ENCODE measurements at regions of chr5 and their contacts with region 1.

Region 1: DNA sequence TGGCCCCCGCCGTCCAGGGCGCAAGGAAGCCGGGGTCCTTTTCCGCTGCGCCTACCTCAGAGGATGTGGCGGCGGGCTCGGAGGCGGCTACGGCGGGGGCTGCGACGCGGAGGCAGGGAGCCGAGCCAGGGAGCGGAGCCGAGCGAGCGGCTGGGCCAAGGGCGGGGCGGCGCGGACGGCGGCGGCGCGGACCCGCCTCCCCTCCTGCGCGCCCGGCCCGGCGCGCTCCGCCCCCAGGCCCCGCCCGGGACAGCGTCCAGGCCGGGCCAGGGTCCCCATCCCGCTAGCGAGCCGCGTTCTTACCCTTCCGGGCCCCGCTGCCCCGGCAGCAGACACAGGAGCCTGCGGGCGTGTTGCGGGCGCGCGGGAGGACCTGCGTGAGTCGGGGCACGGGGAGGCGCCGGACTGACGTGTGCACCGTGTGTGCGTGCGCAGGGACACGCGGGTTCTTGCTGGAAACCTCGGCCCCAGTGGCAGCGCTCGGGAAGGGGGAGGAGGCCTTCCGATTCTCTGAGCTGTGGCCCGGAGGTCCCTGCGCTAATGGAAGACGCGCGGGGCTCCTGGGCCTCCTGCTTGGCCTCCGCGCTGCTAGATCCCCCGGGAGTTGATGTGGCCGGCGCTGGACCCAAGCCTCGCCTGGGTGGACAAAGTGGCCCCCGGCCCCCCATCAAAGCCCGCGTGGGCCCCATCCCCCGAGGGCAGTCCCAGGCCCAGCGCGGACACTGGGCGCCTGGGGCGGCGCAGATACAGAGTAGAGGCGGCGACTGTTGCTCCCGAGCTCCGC is at the start of gene VDAC1:
- DNase-seq: peak; percentile 90
- H3K4me3 ChIP-seq: peak within 1 kb of the TSS; percentile 97
- H3K27ac ChIP-seq: peak within 1 kb of the TSS; percentile 98
- H3K4me1 ChIP-seq: peaks cover 15% of the 10 kb centered on the region
- H3K27me3 ChIP-seq: no peaks in the 10 kb centered on the region
- CTCF ChIP-seq: no peak
- total RNA-seq, gene VDAC1: 354 and 367 TPM in 2 replicates

Region 2: DNA sequence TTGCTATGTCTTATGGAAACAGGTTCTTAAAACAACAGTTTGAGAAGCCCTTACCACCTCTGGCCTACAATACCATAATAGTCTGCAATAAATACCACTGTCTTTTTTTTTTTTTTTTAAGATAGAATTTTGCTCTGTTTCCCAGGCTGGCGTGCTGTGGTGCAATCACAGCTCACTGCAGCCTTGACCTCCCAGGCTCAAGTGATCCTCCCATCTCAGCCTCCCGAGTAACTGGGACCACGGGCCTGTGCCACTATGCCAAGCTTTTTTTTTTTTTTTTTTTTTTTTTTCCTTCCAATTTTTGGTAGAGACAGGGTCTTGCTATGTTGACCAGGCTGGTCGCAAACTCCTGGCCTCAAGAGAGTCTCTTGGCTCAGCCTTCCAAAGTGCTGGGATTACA is 1078.3 kb before region 1 on chr5:
- CTCF ChIA-PET with region 1: no interaction called
- POLR2A ChIA-PET with region 1: interaction called, 11 read pairs
- intact Hi-C with region 1: no loop called
- DNase-seq: no peak
- H3K4me3 ChIP-seq: no peak overlapping the region
- H3K27ac ChIP-seq: no peak overlapping the region
- H3K4me1 ChIP-seq: no peaks in the 10 kb centered on the region
- H3K27me3 ChIP-seq: no peaks in the 10 kb centered on the region
- CTCF ChIP-seq: no peak

Region 3: DNA sequence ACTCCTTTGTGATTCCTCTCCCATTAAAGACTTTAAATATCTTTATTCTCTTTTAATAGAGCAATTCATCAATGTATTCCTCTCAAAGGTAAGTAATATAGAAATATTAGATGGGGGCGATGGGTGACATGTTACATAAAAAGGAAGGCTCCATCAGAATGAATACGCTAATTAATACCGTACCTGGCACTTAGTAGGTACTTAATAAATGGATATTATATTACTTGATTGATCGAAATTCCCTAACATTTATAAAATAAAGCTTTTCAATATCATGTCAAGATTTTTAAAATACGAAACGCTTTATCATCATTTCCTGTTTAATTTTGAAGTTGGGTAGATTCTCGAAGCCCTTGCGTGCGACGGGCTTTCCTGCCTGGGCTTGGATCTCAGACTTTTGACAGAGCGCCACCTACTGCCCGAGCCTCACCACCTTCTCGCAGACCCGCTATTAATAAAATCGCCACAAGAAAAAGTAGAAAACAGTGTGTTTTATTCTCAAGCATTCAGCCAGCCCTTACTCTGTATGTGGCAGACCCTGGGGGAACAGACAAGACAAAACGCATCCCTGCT is 135.8 kb before region 1 on chr5:
- CTCF ChIA-PET with region 1: no interaction called
- POLR2A ChIA-PET with region 1: interaction called, 10 read pairs
- intact Hi-C with region 1: no loop called
- DNase-seq: peak; percentile 89
- H3K4me3 ChIP-seq: no peak overlapping the region
- H3K27ac ChIP-seq: peak overlapping the region; percentile 91
- H3K4me1 ChIP-seq: peaks cover 76% of the 10 kb centered on the region
- H3K27me3 ChIP-seq: no peaks in the 10 kb centered on the region
- CTCF ChIP-seq: peak; percentile 95

Region 4: GRCh38 chr5:133938929-133939328 is 65.9 kb before region 1 on chr5:
- CTCF ChIA-PET with region 1: no interaction called
- POLR2A ChIA-PET with region 1: no interaction called
- intact Hi-C with region 1: no loop called
- DNase-seq: no peak
- H3K4me3 ChIP-seq: no peak overlapping the region
- H3K27ac ChIP-seq: no peak overlapping the region
- H3K4me1 ChIP-seq: peaks cover 8% of the 10 kb centered on the region
- H3K27me3 ChIP-seq: no peaks in the 10 kb centered on the region
- CTCF ChIP-seq: no peak

Region 5: DNA sequence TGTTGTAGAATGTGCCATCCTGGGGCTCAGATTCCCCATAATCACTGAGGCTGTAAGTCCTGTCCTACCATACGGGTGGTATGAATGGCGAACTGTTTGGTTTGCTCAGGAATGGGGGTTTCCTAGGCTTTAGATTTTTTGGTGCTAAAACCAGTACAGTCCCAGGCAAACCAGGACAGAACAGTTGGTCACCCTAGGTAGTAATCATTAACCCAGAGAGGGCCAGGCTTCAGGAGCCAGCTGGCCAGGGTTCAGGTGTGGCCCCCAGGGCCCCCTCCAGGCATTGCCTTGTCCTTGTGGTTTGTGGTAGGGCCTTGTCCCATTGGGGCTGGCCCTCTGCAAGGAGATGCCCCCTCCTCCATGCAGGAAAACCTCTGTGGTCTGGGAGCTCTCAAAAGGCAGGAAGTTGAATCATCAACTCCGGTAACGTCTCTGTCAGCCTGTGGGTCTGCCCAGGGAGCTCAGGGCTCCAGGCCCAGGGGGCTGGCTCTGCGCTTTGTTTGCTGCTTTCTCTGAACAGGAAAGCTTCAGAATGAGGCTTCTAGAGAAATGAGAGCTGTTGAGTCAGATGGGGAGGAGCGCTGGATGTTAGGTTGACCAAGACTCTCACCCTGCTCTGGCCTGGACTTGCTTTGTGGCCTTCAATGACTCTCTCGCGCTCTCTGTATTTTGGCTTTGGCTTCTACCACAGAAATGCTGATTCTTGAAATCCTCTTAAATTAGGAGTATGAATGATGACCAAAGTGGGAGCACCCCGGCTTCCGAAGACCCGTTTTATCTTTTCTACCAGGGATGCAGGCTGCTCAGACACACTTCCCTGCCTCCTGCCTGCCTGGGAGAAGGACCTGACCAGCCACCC is 498.5 kb after region 1 on chr5:
- CTCF ChIA-PET with region 1: no interaction called
- POLR2A ChIA-PET with region 1: no interaction called
- intact Hi-C with region 1: no loop called
- DNase-seq: peak; percentile 89
- H3K4me3 ChIP-seq: no peak overlapping the region
- H3K27ac ChIP-seq: peak overlapping the region; percentile 31
- H3K4me1 ChIP-seq: peaks cover 14% of the 10 kb centered on the region
- H3K27me3 ChIP-seq: no peaks in the 10 kb centered on the region
- CTCF ChIP-seq: no peak

Region 6: GRCh38 chr5:135174315-135175096 is 1169.7 kb after region 1 on chr5:
- CTCF ChIA-PET with region 1: no interaction called
- POLR2A ChIA-PET with region 1: interaction called, 15 read pairs
- intact Hi-C with region 1: no loop called
- DNase-seq: no peak
- H3K4me3 ChIP-seq: no peak overlapping the region
- H3K27ac ChIP-seq: no peak overlapping the region
- H3K4me1 ChIP-seq: no peaks in the 10 kb centered on the region
- H3K27me3 ChIP-seq: peaks cover 37% of the 10 kb centered on the region
- CTCF ChIP-seq: peak; percentile 43; the same call in 1 of the 2 replicates